Stomach (tissue), 19 donors: ENCODE measurements at regions of chr1 and their contacts with region 1.

Region 1: DNA sequence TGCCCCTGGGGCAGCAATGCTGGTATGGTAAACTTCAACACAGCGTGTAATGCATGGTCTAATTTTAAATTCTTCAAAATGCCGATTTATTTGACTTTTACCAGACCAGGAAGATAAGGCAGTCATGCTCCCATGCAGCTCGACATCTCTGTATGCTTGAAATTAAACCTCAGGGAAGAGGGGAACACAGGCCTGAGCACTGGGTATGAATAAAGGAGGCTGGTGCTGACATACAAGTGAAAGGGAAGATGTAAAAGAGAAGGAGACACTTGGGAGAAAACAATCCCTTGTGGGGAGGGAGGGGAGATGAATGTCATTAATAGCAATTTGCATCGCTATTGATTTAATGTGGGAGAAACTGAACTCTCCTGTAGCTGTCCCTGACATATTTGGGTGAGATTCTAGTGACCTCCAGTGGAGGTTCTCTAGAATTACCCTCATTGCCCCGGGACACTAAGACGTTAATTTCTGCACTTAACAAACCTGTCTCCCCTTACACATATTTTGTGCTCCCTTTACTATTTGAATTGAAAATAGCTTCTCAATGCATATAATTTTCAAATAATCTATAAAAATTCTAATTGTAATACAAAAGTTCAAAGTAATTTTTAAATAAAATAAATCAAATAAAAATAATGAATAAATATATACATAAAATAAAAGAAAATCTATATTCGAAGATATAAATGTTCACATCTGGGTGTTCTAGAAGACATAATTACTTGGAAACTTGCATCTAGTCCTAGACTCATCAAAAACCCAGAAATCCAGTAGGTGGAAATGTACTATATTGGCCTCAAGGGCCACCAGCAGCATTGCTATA is 283.1 kb downstream of the LMX1A start:
- DNase-seq: peak in 1 of 2 donors; percentile 80
- H3K4me3 ChIP-seq: no peak overlapping the region
- H3K27ac ChIP-seq: no peak overlapping the region
- H3K4me1 ChIP-seq: peaks cover 0 to 16% (median 3%) of the 10 kb centered on the region in 4 donors
- H3K27me3 ChIP-seq: no peaks in the 10 kb centered on the region
- CTCF ChIP-seq: peak in 5 of 7 experiments; percentile 51 to 66 (median 59)
- EP300 ChIP-seq: no peak
- POLR2A ChIP-seq: no peak

Region 2: DNA sequence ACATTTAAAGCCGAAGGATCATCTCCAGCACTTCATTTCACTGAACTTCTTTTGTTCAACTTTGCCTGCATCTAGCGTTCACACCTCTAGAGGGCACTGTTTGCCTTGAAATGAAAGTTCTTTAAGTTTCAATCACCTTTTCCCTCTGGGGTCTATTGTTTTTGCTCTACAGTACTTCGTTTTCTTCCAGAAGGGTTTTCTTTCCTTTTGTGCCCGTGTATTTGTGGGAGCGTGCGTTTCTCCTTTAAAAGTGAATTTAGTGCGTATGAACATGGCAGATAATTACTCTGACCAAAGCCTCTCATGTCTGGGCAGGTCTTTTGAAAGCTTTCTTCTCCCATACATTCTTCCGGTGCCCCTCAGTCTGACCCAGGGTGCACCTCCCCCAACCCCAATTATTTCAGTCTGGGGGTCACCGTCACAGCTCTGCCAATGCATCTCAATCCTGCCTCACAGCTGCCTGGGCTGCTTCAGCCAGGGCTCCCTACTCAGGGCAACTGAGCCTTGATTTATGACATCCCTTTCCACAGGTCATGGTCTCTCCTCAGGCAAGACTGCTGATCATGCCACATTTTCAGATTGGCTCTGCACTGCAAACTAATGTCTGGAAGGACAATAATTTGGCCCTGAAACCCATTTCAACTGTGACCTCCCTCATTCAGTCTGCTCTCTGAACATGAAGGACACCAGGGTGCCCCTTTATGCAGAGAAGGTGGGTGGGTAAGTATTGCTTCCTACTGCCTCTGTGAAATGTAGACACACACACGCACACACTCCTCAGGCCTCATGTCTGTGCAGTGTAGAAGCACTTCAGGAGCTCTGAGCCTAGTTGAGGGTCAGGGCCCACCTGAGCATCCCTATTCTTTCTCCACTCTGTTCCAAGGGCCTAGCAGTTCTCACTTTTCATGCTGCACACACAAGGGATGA is 1663.1 kb before region 1 on chr1:
- intact Hi-C with region 1: loop called (anchors 10 kb)
- DNase-seq: peak; percentile 44 to 82
- H3K4me3 ChIP-seq: no peak overlapping the region
- H3K27ac ChIP-seq: no peak overlapping the region
- H3K4me1 ChIP-seq: peaks cover 0 to 6% (median 0%) of the 10 kb centered on the region in 4 donors
- H3K27me3 ChIP-seq: no peaks in the 10 kb centered on the region
- CTCF ChIP-seq: peak in 5 of 7 experiments; percentile 47 to 66 (median 59)
- EP300 ChIP-seq: no peak
- POLR2A ChIP-seq: no peak

Region 3: DNA sequence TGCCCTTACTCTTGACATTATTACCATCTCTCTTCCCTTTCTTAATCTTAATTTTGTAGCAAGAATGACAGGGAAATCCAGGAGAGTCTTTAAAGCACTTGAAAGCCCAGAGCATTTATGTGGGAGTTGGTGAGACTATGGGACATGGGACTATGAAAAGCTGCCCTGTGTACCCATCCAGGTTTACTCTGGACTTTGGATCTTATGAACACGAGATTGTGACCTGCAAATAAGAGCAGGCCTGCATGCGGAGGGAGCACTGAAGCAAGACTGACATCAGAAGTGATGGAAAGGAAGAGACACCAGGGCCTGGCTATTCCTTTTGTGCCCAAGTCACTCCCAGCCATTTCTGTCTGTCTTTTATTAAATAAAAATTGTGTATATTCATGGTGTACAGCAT is 1542.1 kb before region 1 on chr1:
- intact Hi-C with region 1: loop called (anchors 5 kb)
- DNase-seq: no peak
- H3K4me3 ChIP-seq: no peak overlapping the region
- H3K27ac ChIP-seq: no peak overlapping the region
- H3K4me1 ChIP-seq: no peaks in the 10 kb centered on the region
- H3K27me3 ChIP-seq: no peaks in the 10 kb centered on the region
- CTCF ChIP-seq: no peak
- EP300 ChIP-seq: no peak
- POLR2A ChIP-seq: no peak

Region 4: GRCh38 chr1:165010418-165011070 is 62.9 kb before region 1 on chr1:
- intact Hi-C with region 1: no loop called
- DNase-seq: peak in 1 of 2 donors; percentile 20
- H3K4me3 ChIP-seq: no peak overlapping the region
- H3K27ac ChIP-seq: no peak overlapping the region
- H3K4me1 ChIP-seq: no peaks in the 10 kb centered on the region
- H3K27me3 ChIP-seq: no peaks in the 10 kb centered on the region
- CTCF ChIP-seq: no peak
- EP300 ChIP-seq: no peak
- POLR2A ChIP-seq: no peak